T-cell (primary cell): ENCODE measurements at regions of chr3 and their contacts with region 1.

Region 1: DNA sequence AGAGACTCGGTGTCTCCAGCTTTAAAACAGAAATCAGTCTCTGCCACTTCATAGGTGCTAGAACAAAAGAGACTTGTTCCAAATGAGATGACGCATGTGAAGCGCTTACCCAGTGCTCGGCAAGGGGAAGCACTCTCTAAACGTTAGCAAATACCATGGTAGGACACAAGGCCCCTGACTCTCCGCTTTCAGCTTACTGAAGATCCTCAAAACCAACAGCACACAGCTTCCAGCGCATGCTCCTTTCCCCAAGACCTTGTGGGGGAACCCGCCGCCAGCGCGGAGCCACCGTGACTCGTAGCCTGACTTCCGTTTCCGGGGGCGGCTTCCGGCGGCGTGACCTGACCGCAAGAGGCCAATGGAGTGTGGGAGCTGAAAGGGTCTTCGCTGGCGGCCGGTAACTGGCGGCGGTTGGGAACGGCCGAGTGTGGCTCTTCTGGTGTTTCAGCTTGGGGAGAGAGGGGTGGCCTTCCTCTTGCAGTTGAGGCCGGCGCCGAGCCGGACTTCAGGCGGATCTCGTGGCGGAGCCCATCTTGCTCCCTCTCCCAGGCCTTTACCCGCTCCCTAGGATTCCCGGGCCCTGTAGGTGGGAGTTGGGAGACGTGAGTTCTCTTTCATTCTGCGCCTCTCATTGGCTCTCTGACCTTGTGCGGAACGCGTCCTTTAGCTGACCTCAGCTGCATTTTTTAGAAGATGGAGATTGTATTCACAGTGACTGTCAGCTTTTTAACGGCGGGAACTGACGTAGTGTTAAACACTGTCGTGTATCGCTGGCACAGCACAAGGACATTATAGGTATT is at the start of gene THUMPD3:
- DNase-seq: peak; percentile 75 to 94 (median 87)
- ATAC-seq: peak; percentile 93 to 97 (median 96)
- H3K4me3 ChIP-seq: peak within 1 kb of the TSS; percentile 75 to 97
- H3K4me3 Mint-ChIP-seq: peak within 1 kb of the TSS; percentile 98 to 99 (median 98)
- H3K27ac ChIP-seq: peak within 1 kb of the TSS; percentile 96
- H3K27ac Mint-ChIP-seq: peak within 1 kb of the TSS; percentile 95 to 97
- H3K4me1 ChIP-seq: peaks cover 3 to 14% of the 10 kb centered on the region in 2 experiments
- H3K4me1 Mint-ChIP-seq: peaks cover 10 to 30% (median 30%) of the 10 kb centered on the region in 3 donors
- H3K27me3 ChIP-seq: no peaks in the 10 kb centered on the region
- H3K27me3 Mint-ChIP-seq: no peaks in the 10 kb centered on the region
- total RNA-seq, gene THUMPD3: 33.3 to 44.4 (median 43.5) TPM

Region 2: DNA sequence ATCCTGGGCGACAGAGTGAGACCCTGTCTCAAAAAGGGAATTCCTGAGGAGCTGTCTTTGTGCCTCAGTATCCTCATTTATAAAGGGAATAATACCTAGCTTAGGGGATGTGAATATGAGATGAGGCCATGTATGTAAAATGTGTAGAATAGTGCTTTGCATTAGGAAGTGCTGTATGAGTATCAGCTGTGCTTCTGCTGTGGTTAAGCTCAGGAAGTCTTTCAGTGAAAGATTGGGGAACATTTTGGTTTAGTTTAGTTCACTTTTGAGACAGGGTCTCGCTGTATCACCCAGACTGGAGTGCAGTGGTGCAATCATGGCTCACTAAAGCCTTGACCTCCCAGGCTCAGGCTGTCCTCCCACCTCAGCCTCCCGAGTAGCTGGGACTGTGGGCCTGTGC is 10.5 kb after region 1 on chr3:
- CTCF ChIA-PET with region 1: interaction called in 1 of 2 experiments, 4 read pairs
- POLR2A ChIA-PET with region 1: interaction called in 1 of 2 experiments, 10 read pairs
- DNase-seq: no peak
- ATAC-seq: no peak
- H3K4me3 ChIP-seq: peak overlapping the region in 1 of 2 donors; percentile 19
- H3K4me3 Mint-ChIP-seq: peak overlapping the region in 1 of 3 donors; percentile 8
- H3K27ac ChIP-seq: no peak overlapping the region
- H3K27ac Mint-ChIP-seq: peak overlapping the region in 1 of 2 donors; percentile 53
- H3K4me1 ChIP-seq: peaks cover 0 to 9% of the 10 kb centered on the region in 2 experiments
- H3K4me1 Mint-ChIP-seq: peaks cover 30 to 54% (median 44%) of the 10 kb centered on the region in 3 donors
- H3K27me3 ChIP-seq: no peaks in the 10 kb centered on the region
- H3K27me3 Mint-ChIP-seq: no peaks in the 10 kb centered on the region

Region 3: DNA sequence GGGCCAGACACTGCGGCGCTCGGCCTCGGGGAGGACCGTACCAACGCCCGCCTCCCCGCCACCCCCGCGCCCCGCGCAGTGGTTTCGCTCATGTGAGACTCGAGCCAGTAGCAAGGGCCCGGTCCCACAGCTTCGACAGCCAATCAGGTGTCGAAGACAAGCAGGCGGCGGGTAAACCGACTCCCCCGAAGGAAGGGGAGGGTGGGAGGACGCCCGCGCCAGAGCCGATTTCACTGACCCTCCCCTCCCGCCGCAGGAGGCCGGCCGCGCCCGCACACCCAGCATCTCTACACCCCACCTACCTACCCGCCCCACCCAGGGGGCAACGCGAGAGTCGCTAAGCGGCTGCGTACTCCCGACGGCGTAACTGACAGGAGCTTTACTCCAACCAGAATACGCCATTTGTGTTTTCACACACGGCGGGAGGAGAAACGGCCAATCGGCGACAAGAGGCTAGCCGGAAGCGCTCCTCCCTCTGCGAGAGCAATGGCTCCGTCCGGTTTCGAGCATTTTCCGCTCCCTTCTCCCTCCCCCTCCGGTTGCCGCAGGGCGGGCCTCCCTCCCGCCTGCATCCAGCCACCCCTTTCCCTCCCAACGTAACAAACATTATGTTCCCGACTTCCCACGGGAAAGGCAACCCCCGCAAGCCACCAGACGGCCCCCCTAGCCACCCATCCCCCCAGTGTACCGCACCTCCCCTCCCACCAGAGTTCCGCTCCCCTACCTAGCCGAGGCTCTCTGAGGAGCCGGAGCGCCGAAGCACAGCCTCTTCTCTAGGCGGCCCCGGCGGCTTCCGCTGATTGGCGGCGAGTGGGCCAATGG is 34.0 kb after region 1 on chr3:
- CTCF ChIA-PET with region 1: interaction called, 6 to 24 read pairs
- POLR2A ChIA-PET with region 1: interaction called, 17 to 47 read pairs
- DNase-seq: peak; percentile 97 to 100 (median 99)
- ATAC-seq: peak; percentile 70 to 75 (median 71)
- H3K4me3 ChIP-seq: peak overlapping the region; percentile 80
- H3K4me3 Mint-ChIP-seq: peak overlapping the region; percentile 93 to 100 (median 95)
- H3K27ac ChIP-seq: peak overlapping the region; percentile 95
- H3K27ac Mint-ChIP-seq: peak overlapping the region; percentile 97 to 98
- H3K4me1 ChIP-seq: peaks cover 48 to 53% of the 10 kb centered on the region in 2 experiments
- H3K4me1 Mint-ChIP-seq: peaks cover 73 to 79% (median 75%) of the 10 kb centered on the region in 3 donors
- H3K27me3 ChIP-seq: no peaks in the 10 kb centered on the region
- H3K27me3 Mint-ChIP-seq: no peaks in the 10 kb centered on the region

Region 4: DNA sequence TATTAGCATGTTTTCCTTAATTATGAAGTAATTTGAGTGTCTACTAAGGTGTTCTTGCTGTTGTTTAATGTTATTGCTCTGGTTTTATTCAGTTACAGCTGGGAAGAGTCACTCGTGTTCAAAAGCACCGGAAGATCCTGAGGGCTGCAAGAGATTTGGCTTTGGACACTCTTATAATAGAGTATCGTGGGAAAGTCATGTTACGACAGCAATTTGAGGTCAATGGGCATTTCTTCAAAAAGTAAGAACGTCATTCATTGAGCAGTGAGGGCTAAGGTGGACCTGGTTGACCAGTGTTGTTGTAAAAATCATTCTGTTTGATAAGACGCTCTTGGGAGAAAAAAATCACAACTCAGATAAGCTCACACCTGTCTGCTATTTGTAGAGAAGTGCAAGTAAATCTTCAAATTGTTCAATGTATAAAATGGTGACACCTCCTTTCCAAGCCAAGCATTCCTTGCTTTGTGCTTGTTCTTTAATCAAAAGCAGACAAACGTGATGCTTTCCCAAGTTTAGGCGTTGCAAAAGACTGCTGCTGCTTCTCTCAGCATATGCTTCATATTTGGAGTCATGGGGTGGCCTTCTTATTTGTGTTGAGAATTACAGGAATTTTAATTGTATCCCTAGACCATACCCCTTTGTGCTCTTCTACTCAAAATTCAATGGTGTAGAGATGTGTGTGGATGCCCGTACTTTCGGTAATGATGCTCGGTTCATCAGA is 78.7 kb after region 1 on chr3:
- CTCF ChIA-PET with region 1: no interaction called
- POLR2A ChIA-PET with region 1: no interaction called
- DNase-seq: no peak
- ATAC-seq: no peak
- H3K4me3 ChIP-seq: no peak overlapping the region
- H3K4me3 Mint-ChIP-seq: no peak overlapping the region
- H3K27ac ChIP-seq: no peak overlapping the region
- H3K27ac Mint-ChIP-seq: no peak overlapping the region
- H3K4me1 ChIP-seq: no peaks in the 10 kb centered on the region
- H3K4me1 Mint-ChIP-seq: peaks cover 0 to 7% (median 4%) of the 10 kb centered on the region in 3 donors
- H3K27me3 ChIP-seq: no peaks in the 10 kb centered on the region
- H3K27me3 Mint-ChIP-seq: no peaks in the 10 kb centered on the region